Astrocyte of the cerebellum (primary cell): ENCODE measurements at regions of chr6 and their contacts with region 1.

Region 1: DNA sequence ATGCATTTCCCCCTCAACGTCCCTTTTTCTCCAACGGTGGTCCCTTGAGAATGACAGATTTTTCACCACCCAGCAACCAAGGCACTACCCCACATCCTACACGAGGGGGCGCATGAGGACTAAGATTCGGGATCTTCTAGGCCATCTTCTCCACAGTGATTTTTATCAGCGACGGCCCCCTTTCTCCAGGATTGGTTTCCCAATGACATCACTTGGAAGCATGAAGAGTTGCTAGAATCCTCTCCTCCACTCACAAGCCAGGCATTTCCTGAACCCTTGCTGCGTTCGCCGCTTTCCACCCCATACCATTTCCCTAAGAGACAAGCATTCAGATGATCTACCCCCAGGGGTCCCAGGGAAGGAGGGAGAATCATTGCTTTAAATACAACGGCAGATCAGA is 252.0 kb downstream of the HIVEP2 start:
- DNase-seq: peak; percentile 92
- H3K4me3 ChIP-seq: peak overlapping the region; percentile 11
- CTCF ChIP-seq: peak; percentile 90

Region 2: DNA sequence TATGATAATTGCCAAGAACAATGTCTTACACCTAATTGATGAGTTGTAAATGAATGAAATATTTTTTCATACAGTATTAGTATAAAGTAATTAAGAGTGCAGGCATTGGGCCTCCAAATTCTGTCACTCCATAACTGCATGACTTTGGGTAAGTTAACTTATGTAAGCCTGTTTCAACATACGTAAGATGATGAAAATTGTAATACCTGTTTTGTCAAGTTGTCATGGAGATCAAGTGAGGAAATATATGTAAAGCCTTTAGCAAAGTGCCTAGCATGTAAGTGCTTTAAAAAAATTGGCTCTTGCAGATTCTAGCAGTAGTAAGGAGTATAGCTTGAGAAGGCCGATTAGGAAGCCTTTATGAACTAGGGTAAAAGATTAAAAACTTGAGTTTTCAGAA is 515.7 kb before region 1 on chr6:
- in situ Hi-C with region 1: no loop called
- DNase-seq: no peak
- H3K4me3 ChIP-seq: no peak overlapping the region
- CTCF ChIP-seq: no peak

Region 3: DNA sequence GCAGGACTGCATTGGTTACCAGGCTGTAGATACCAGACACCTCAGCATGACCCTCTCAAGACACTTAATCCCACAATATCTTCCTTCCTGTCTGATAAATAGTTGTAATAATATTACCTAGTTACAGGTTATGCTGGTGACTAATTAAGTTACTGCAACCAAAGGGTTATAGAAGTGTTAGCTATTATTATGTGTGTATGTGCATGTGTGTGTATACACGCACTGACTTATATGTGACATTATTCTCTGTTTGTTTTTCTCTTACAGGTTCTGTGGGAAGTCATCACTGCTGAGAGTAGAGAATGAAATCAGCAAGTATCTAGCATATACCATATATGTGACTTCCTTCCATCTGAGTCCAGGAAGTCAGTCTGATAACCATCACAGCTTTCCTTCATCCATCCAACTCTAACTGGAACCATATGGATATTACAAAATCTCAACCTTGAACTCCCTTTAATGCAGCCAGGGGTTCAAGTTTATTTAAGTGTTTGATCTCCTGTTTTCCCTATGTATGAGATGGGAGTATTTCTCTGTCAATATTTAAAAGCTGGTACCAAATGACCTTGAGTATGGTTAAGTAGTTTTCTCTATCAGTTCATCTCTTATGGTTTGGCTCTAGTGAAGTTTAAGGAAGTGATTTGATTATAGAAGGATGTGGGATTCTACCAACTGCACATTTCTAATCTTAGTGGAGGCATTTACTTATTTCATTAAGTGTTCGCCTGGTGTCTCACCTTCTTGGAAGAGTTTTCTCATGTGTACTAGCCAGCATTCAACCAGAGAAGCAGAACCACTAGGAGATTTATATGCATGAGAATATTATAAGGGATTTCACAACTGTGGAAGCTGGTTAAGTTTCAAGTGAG is 61.2 kb before region 1 on chr6:
- in situ Hi-C with region 1: no loop called
- DNase-seq: no peak
- H3K4me3 ChIP-seq: no peak overlapping the region
- CTCF ChIP-seq: no peak

Region 4: GRCh38 chr6:142944124-142945066 is 251.5 kb after region 1 on chr6:
- in situ Hi-C with region 1: loop called (anchors 5 kb)
- DNase-seq: peak; percentile 88
- H3K4me3 ChIP-seq: peak overlapping the region; percentile 90
- CTCF ChIP-seq: no peak

Region 5: DNA sequence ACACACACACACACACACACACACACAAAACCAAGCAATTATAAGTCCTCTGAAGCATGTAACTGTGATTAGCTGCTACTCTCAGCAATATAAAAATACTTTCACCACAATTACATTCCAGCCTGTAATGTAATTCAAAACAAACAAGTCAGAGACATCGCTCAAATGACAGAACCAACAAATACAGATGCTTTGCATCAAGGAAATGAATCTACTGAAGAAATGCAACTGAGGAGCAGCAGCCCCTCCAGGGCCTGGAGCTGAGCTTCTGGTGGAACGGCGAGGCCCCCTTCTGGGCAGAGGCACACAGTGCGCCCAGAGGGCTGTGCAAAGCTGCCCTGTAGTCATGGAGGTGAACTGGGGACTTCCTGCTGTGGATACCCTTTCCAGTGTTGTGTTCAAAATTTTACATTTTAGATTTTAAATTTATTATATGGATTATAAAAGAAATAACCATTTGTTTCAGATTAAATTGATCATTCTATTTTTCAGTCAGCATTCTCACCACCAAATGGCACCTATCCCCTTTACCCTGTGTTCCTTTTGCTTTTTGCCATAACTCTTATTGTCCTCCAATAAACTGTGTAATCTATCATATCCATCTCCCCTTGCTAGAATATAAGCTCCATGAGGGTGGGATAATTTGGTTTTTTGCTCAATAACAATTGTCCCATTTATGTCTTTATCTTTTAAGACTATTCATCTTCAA is 734.3 kb after region 1 on chr6:
- in situ Hi-C with region 1: loop called (anchors 5 kb)
- DNase-seq: peak; percentile 75
- H3K4me3 ChIP-seq: no peak overlapping the region
- CTCF ChIP-seq: peak; percentile 99